ENCODE measurements at regions of chr13 and their contacts with region 1.

Region 1: DNA sequence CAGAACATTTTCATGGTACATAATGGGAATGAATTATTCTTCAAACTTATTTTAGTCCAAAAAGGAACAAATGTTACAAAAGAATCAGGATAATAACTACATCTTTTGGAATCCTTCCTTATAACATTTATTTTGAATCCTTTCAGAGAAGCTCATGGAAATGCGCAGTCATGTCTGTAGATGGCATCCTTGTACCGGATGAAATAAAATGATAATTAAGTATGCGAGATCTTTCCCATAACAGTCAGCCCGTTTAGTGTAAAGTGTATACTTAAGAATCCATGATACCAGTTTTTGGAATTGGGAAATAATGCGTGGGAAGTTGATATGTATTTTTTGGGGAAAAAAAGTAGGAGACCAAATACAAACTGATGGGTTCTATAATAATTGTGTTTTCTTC is 418.8 kb downstream of the GPC5 start:
- DNase-seq: peak; percentile 19
- H3K4me3 ChIP-seq: no peak overlapping the region
- H3K27ac ChIP-seq: no peak overlapping the region
- H3K4me1 ChIP-seq: no peaks in the 10 kb centered on the region
- H3K27me3 ChIP-seq: no peaks in the 10 kb centered on the region
- CTCF ChIP-seq: peak; percentile 8 to 12
- POLR2A ChIP-seq: no peak

Region 2: GRCh38 chr13:91601273-91601672 is 216.0 kb before region 1 on chr13:
- CTCF ChIA-PET with region 1: no interaction called
- POLR2A ChIA-PET with region 1: no interaction called
- dilution Hi-C with region 1: no loop called
- intact Hi-C with region 1: no loop called
- DNase-seq: no peak
- H3K4me3 ChIP-seq: no peak overlapping the region
- H3K27ac ChIP-seq: no peak overlapping the region
- H3K4me1 ChIP-seq: no peaks in the 10 kb centered on the region
- H3K27me3 ChIP-seq: no peaks in the 10 kb centered on the region
- CTCF ChIP-seq: no peak
- POLR2A ChIP-seq: no peak

Region 3: DNA sequence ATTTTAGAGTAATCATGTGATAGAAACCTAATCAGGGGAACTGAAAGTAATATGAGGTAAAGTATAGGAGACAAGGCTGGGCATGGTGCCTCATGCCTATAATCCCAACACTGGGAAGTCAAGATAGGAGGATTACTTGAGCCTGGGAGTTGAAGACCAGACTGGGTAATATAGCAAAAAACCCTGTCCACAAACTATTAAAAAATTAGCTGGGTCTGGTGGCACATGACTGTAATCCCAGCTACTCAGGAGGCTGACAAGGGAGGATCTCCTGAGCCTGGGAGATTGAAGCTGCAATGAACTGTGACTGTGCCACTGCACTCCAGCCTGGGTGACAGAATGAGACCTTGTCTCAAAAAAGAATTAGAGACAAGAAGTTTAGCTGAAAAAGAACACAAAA is 51.1 kb after region 1 on chr13:
- CTCF ChIA-PET with region 1: no interaction called
- POLR2A ChIA-PET with region 1: no interaction called
- dilution Hi-C with region 1: no loop called
- intact Hi-C with region 1: no loop called
- DNase-seq: no peak
- H3K4me3 ChIP-seq: no peak overlapping the region
- H3K27ac ChIP-seq: no peak overlapping the region
- H3K4me1 ChIP-seq: no peaks in the 10 kb centered on the region
- H3K27me3 ChIP-seq: no peaks in the 10 kb centered on the region
- CTCF ChIP-seq: no peak
- POLR2A ChIP-seq: no peak

Region 4: GRCh38 chr13:91904005-91904404 is 86.8 kb after region 1 on chr13:
- CTCF ChIA-PET with region 1: interaction called, 6 read pairs
- POLR2A ChIA-PET with region 1: no interaction called
- dilution Hi-C with region 1: no loop called
- intact Hi-C with region 1: loop called (anchors 5 kb)
- DNase-seq: no peak
- H3K4me3 ChIP-seq: no peak overlapping the region
- H3K27ac ChIP-seq: peak overlapping the region; percentile 43
- H3K4me1 ChIP-seq: peaks cover 13% of the 10 kb centered on the region
- H3K27me3 ChIP-seq: no peaks in the 10 kb centered on the region
- CTCF ChIP-seq: no peak
- POLR2A ChIP-seq: no peak

Region 5: GRCh38 chr13:91922969-91923592 is 105.8 kb after region 1 on chr13:
- CTCF ChIA-PET with region 1: interaction called, 8 read pairs
- POLR2A ChIA-PET with region 1: no interaction called
- dilution Hi-C with region 1: no loop called
- intact Hi-C with region 1: loop called (anchors 2 kb)
- DNase-seq: no peak
- H3K4me3 ChIP-seq: no peak overlapping the region
- H3K27ac ChIP-seq: no peak overlapping the region
- H3K4me1 ChIP-seq: no peaks in the 10 kb centered on the region
- H3K27me3 ChIP-seq: no peaks in the 10 kb centered on the region
- CTCF ChIP-seq: peak in 1 of 2 donors; percentile 24
- POLR2A ChIP-seq: no peak

Region 6: GRCh38 chr13:91946498-91947070 is 129.3 kb after region 1 on chr13:
- CTCF ChIA-PET with region 1: interaction called, 4 read pairs
- POLR2A ChIA-PET with region 1: no interaction called
- dilution Hi-C with region 1: no loop called
- intact Hi-C with region 1: loop called (anchors 5 kb)
- DNase-seq: peak; percentile 1
- H3K4me3 ChIP-seq: no peak overlapping the region
- H3K27ac ChIP-seq: no peak overlapping the region
- H3K4me1 ChIP-seq: no peaks in the 10 kb centered on the region
- H3K27me3 ChIP-seq: no peaks in the 10 kb centered on the region
- CTCF ChIP-seq: peak in 1 of 2 donors; percentile 11
- POLR2A ChIP-seq: no peak

Region 7: GRCh38 chr13:92074658-92075057 is 257.4 kb after region 1 on chr13:
- CTCF ChIA-PET with region 1: interaction called, 33 read pairs
- POLR2A ChIA-PET with region 1: no interaction called
- dilution Hi-C with region 1: no loop called
- intact Hi-C with region 1: loop called (anchors 1 kb)
- DNase-seq: no peak
- H3K4me3 ChIP-seq: no peak overlapping the region
- H3K27ac ChIP-seq: no peak overlapping the region
- H3K4me1 ChIP-seq: no peaks in the 10 kb centered on the region
- H3K27me3 ChIP-seq: no peaks in the 10 kb centered on the region
- CTCF ChIP-seq: no peak
- POLR2A ChIP-seq: no peak

Region 8: DNA sequence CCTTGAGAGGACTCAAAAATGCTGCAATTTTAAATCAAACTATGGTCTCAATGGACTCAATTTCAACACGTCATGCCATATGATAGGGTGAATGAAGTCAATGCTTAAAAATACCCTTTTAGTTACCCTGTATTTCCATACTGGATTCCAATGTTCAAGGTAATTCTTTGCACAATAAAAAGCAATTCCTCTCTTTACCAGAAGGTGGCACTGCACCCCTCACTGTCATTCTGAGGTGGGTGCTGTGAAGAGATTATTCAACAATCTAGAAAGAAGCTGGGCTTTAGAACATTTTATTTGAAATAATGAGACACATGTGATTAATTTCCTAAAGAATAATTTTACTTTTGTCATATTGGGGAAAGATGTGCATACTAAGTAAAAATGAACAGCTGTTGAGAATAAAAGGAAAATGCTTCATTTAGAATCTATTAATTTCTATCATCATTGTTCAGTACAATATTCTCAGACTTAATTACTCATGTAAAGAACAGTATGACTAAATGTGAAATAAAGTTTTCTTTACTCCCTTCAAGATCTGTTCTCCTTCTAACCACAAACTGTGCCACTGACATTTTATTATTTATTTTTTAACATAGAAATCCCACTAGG is 370.2 kb after region 1 on chr13:
- CTCF ChIA-PET with region 1: interaction called, 3 read pairs
- POLR2A ChIA-PET with region 1: no interaction called
- dilution Hi-C with region 1: no loop called
- intact Hi-C with region 1: loop called (anchors 5 kb)
- DNase-seq: peak; percentile 10
- H3K4me3 ChIP-seq: no peak overlapping the region
- H3K27ac ChIP-seq: no peak overlapping the region
- H3K4me1 ChIP-seq: no peaks in the 10 kb centered on the region
- H3K27me3 ChIP-seq: no peaks in the 10 kb centered on the region
- CTCF ChIP-seq: peak; percentile 49 to 62
- POLR2A ChIP-seq: no peak